ENCODE measurements at regions of chr10 and their contacts with region 1.

Region 1: GRCh38 chr10:95693668-95694534 is at the start of gene TCTN3:
- DNase-seq: peak; percentile 99
- H3K4me3 Mint-ChIP-seq: peak within 1 kb of the TSS; percentile 99
- H3K27ac Mint-ChIP-seq: peak within 1 kb of the TSS; percentile 97
- H3K4me1 Mint-ChIP-seq: peaks cover 31% of the 10 kb centered on the region
- H3K27me3 Mint-ChIP-seq: no peaks in the 10 kb centered on the region
- total RNA-seq, gene TCTN3: 42.7 and 44.6 TPM in 2 replicates

Region 2: GRCh38 chr10:95656291-95657164 is 37.4 kb before region 1 on chr10 and contains the start of gene ALDH18A1:
- intact Hi-C with region 1: loop called (anchors 1 kb)
- DNase-seq: peak; percentile 98
- H3K4me3 Mint-ChIP-seq: peak within 1 kb of the TSS; percentile 98
- H3K27ac Mint-ChIP-seq: peak within 1 kb of the TSS; percentile 97
- H3K4me1 Mint-ChIP-seq: peaks cover 24% of the 10 kb centered on the region
- H3K27me3 Mint-ChIP-seq: no peaks in the 10 kb centered on the region
- total RNA-seq, gene ALDH18A1: 126 TPM in 2 replicates

Region 3: GRCh38 chr10:95796504-95796903 is 102.6 kb after region 1 on chr10:
- intact Hi-C with region 1: no loop called
- DNase-seq: no peak
- H3K4me3 Mint-ChIP-seq: no peak overlapping the region
- H3K27ac Mint-ChIP-seq: peak overlapping the region; percentile 43
- H3K4me1 Mint-ChIP-seq: peaks cover 58% of the 10 kb centered on the region
- H3K27me3 Mint-ChIP-seq: no peaks in the 10 kb centered on the region

Region 4: DNA sequence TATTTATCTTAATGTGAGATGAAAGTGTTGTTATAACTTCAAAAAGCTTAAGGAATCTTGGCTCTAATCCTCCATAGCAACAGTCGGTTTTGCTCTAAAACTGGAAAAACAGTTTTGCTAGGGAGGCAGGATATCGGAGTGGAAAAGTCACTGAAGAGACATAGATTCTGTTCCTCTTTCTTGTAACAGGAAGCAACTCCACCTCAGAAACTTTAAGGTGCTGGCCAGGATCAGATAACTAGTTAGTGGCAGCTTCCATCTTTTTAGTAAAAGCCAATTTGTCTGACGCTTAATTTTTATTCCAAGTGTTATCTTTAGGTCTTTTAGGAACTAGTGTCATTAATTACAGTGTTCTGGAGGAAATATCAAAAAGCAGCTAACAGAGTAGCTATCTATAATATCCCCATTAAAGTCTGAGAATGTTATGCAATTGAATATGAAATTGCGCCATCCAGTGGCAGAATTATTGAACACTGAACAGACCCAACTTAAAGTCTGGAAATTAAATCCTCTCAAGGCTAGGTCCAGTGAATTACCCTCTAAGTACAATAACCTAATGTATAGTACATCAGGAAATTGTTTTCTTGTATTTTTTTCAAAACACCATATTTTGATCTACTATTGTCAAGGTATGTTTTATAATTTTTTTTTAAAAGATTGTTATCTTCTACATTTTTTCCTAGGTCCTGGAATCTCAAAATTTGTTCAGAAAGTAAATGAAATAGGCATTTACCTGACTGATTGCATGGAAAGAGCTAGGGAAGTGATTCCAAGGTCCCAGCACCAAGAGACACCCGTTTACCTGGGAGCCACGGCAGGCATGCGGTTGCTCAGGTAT is 148.0 kb after region 1 on chr10:
- intact Hi-C with region 1: loop called (anchors 1 kb)
- DNase-seq: peak; percentile 85
- H3K4me3 Mint-ChIP-seq: peak overlapping the region; percentile 45
- H3K27ac Mint-ChIP-seq: peak overlapping the region; percentile 78
- H3K4me1 Mint-ChIP-seq: peaks cover 42% of the 10 kb centered on the region
- H3K27me3 Mint-ChIP-seq: no peaks in the 10 kb centered on the region

Region 5: DNA sequence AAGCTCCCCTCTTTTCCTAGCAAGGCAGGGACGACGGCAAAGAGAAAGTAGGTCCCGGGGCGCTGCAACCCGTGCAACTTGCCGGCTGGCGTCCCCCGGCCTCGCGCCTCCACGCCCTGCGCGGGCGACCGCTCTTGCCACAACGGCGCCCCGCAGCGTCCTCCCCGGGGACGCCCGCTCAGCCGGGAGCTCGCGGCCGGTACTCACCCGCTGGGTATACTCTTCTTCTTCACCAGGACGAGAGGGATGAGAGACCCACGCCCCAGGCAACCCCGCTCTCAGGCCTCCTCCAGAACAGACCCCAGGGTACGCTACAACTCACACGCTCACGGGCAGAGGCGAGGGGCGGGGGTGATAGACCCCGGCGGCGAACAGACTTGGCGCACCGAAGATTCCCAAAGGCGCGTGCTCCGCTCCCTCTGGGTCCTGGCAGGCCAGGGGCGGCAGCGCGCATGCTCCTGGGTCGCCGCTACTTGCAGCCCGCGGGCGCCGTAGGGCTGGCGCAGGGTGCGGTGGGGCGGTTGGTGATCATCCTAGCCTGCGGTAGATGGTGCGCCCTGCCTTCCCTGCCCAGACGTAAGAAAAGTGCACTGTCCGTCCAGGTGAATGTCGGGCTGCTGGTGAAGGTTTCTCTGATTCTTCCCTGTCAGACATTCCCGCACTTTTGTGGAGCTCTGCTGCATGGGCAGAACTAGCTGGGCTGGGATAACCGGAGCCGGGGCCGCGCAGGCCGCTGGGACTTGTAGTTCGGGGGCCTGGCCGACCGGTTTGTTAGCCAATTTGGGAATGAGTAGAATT is 213.8 kb after region 1 on chr10 and contains the start of gene CC2D2B:
- intact Hi-C with region 1: loop called (anchors 1 kb)
- DNase-seq: peak; percentile 91
- H3K4me3 Mint-ChIP-seq: peak within 1 kb of the TSS; percentile 93
- H3K27ac Mint-ChIP-seq: peak within 1 kb of the TSS; percentile 94
- H3K4me1 Mint-ChIP-seq: peaks cover 11% of the 10 kb centered on the region
- H3K27me3 Mint-ChIP-seq: peaks cover 14% of the 10 kb centered on the region
- total RNA-seq, gene CC2D2B: 0.26 TPM in 1 of 2 replicates, not detected in the other

Region 6: DNA sequence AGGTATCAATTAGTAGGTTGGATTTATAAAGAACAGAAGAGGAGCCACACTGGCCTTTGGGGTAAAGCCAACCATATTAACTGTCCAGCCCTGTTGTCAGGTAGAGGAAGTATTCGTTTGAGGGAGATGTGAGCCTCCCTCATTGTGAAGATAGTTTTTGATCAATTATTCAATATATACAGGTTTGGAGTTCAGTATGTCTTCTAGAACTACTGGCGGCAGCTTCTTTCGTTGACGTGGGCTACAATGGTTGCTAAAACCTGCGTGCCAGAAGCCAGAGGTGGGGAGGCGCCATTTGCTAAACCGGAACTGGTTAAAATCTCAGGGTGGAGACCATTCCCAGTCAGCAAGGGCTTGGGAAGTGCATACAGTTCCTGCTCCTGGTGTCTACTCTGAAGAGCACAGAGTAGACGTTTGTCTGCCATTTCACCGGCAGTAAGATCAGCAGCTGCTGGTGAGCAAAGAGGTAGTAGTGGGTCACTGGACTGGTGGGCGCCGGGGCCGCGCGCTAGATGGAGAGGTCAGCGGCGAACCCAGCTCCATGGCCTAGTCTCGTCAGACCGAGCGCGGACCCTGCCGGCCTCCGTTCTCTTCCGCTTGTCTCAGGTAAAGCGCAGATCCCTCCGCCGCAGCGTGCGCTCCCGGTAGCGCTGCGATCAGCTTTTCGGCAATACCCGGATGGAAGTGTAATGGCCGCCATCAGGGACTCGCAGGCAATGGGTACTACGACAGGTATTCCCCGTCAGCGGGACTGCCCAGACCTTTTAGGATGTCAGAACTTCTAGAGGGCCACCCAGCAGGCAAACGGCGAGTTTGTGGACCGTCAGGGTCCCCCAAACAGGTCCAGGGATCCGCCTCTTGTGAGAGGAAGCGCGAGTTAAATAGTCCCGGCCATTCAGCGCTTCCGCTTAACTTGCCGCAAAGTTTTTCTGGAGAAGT is 435.8 kb after region 1 on chr10 and contains the start of gene ZNF518A:
- intact Hi-C with region 1: loop called (anchors 5 kb)
- DNase-seq: peak; percentile 96
- H3K4me3 Mint-ChIP-seq: peak within 1 kb of the TSS; percentile 94
- H3K27ac Mint-ChIP-seq: peak within 1 kb of the TSS; percentile 98
- H3K4me1 Mint-ChIP-seq: peaks cover 23% of the 10 kb centered on the region
- H3K27me3 Mint-ChIP-seq: peaks cover 28% of the 10 kb centered on the region
- total RNA-seq, gene ZNF518A: 16.9 and 17.2 TPM in 2 replicates